ENCODE measurements at regions of chr11 and their contacts with region 1.

Region 1: DNA sequence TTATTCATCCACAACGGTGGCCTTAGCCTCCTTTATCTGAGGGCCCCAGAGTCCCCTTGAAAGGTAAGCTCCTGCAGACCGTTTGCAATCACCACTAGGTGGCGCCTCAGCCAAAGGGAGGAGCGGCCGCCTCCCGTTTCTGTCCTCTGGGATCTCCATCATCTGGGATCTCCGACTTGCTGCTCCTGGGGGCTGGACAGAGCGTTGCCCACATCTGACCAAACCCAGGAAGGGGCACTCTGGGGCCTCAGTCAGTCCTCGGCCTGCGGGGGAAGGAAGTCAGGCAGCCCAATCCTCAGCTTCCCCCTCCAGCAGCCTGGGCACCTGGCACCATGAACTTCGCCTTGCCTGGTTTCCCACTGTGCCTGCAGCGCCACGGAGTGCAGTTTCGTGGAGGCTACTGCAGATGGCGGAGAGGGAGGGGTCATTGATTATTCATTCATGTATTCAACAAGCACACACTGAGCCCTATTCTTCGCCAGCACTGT is 23.5 kb downstream of the TP53I11 start:
- DNase-seq: peak; percentile 79
- ATAC-seq: peak; percentile 71
- H3K4me3 Mint-ChIP-seq: no peak overlapping the region
- H3K27ac Mint-ChIP-seq: no peak overlapping the region
- H3K4me1 Mint-ChIP-seq: no peaks in the 10 kb centered on the region
- H3K27me3 Mint-ChIP-seq: no peaks in the 10 kb centered on the region

Region 2: GRCh38 chr11:44854086-44854485 is 73.1 kb before region 1 on chr11:
- CTCF ChIA-PET with region 1: no interaction called
- POLR2A ChIA-PET with region 1: no interaction called
- intact Hi-C with region 1: no loop called
- DNase-seq: no peak
- ATAC-seq: no peak
- H3K4me3 Mint-ChIP-seq: no peak overlapping the region
- H3K27ac Mint-ChIP-seq: no peak overlapping the region
- H3K4me1 Mint-ChIP-seq: peaks cover 17% of the 10 kb centered on the region
- H3K27me3 Mint-ChIP-seq: peaks cover 26% of the 10 kb centered on the region

Region 3: DNA sequence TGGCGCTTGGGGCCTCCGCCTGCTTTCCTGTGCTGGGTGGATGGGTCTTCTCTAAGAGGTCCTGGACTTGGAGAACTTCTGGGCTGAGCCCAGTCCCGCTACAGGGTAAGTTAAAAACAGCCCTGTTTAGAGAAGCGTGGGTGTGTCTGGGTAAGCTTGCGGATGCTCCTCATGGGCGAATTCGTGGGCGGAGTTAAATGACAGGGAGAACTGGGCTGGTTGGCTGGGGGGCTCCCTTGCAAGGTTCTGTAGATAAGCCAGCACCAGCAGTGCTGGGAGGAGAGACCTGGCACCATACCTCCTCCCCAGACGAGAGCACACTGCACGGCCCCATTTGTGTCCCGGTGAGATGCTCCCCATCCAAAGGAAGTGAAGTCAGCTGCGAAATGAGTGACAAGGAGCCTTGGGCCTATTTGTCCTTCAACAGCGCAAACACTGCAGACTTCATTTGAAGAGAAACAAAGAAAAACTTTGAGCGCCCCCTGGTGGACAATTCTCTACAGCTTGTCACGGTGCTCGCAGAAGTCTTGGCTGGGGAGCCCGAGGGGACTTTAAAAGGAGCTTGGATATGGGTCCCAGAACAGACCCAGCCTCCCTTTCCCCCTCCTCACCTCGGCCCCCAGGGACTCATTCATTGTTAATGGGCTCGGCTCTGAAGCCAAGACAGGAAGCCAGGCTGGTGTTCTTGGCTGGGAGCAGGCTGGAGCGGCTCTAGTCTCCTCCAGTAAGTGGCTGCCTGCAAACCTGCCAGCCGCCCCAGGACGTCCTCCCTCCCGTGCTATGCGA is 16.0 kb before region 1 on chr11:
- CTCF ChIA-PET with region 1: interaction called, 13 read pairs
- POLR2A ChIA-PET with region 1: no interaction called
- intact Hi-C with region 1: no loop called
- DNase-seq: peak; percentile 93
- ATAC-seq: peak; percentile 91
- H3K4me3 Mint-ChIP-seq: no peak overlapping the region
- H3K27ac Mint-ChIP-seq: no peak overlapping the region
- H3K4me1 Mint-ChIP-seq: peaks cover 3% of the 10 kb centered on the region
- H3K27me3 Mint-ChIP-seq: no peaks in the 10 kb centered on the region

Region 4: GRCh38 chr11:44950625-44951476 is 23.6 kb after region 1 on chr11 and contains the start of gene TP53I11:
- CTCF ChIA-PET with region 1: interaction called, 13 read pairs
- POLR2A ChIA-PET with region 1: no interaction called
- intact Hi-C with region 1: no loop called
- DNase-seq: peak; percentile 84
- ATAC-seq: peak; percentile 76
- H3K4me3 Mint-ChIP-seq: peak within 1 kb of the TSS; percentile 71
- H3K27ac Mint-ChIP-seq: no peak within 1 kb of the TSS
- H3K4me1 Mint-ChIP-seq: peaks cover 10% of the 10 kb centered on the region
- H3K27me3 Mint-ChIP-seq: no peaks in the 10 kb centered on the region
- total RNA-seq, gene TP53I11: 14.3 to 15.8 TPM

Region 5: DNA sequence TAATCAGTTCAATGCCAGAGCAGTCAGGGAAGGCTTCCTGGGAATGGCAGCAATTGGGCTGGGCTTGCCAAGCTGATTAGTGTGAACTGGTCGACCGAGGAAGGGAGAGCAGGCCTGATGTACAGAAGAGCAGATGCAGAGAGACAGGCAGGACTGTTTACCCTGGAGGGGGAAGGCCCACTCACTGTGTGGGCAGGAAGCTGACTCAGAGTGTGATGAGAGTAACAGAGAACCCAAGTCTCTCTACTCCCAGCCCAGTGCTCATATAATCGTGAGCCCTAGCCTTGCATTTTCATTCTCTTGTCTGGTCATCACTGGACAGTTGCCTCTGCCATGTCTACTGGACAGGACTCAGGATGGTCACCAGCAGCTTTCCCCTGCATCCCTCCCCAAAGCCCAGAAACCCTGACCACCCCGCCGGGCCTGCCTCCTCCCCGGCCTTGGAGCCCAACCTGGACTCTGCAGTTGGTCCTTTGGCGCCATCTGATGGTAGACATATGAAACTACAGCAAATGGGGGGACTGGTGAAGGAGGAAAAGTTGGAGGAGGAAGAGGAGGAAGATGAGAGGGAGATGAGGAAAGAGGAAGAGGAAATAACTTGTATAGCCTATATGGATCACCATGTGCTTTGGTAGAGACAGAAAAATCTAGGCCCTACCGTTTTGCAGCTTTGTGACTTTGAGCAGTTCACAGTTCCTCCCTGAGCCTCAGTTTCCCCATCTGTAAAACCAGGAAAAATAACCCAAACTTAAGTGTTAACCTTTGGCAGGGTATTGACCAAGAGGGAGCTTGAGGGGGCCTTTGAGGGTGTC is 175.8 kb after region 1 on chr11:
- CTCF ChIA-PET with region 1: interaction called, 798 read pairs
- POLR2A ChIA-PET with region 1: no interaction called
- intact Hi-C with region 1: loop called (anchors 1 kb)
- DNase-seq: peak; percentile 85
- ATAC-seq: peak; percentile 98
- H3K4me3 Mint-ChIP-seq: peak overlapping the region; percentile 47
- H3K27ac Mint-ChIP-seq: peak overlapping the region; percentile 59
- H3K4me1 Mint-ChIP-seq: peaks cover 18% of the 10 kb centered on the region
- H3K27me3 Mint-ChIP-seq: peaks cover 7% of the 10 kb centered on the region

Region 6: GRCh38 chr11:45294499-45294898 is 367.3 kb after region 1 on chr11:
- CTCF ChIA-PET with region 1: no interaction called
- POLR2A ChIA-PET with region 1: no interaction called
- intact Hi-C with region 1: loop called in 1 of 2 experiments (anchors 5 kb)
- DNase-seq: no peak
- ATAC-seq: no peak
- H3K4me3 Mint-ChIP-seq: no peak overlapping the region
- H3K27ac Mint-ChIP-seq: no peak overlapping the region
- H3K4me1 Mint-ChIP-seq: no peaks in the 10 kb centered on the region
- H3K27me3 Mint-ChIP-seq: peaks cover 25% of the 10 kb centered on the region

Measured in activated CD4-positive, alpha-beta T cell treated with anti-CD3 and anti-CD28 coated beads for 36 hours (primary cell).